ENCODE measurements at regions of chr13 and their contacts with region 1.

Region 1: DNA sequence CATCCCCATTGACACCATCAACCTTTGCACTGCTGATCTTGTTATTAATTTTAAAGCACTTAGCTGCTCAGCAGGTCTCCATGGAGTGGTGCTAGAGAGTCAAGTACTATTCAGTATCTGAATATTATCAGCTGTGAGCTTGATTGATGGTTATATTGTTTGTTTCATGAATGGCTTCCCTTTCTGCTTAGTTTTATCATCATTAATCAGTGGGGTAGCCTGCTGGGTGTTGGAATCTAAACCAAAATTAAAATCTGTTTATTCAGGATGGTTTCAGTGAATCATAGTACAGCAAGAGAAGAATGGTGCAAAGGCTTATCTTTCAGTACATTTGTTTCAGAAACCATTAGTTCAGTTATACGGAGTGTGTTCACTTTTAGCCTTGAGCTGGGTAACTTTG is 42.5 kb upstream of the SCEL start:
- DNase-seq: peak in 2 of 4 donors; percentile 16 to 26
- ATAC-seq: peak; percentile 50
- H3K4me3 ChIP-seq: no peak overlapping the region
- H3K27ac ChIP-seq: no peak overlapping the region
- H3K4me1 ChIP-seq: no peaks in the 10 kb centered on the region
- H3K27me3 ChIP-seq: no peaks in the 10 kb centered on the region
- CTCF ChIP-seq: peak in 6 of 7 experiments; percentile 31 to 59 (median 54)
- POLR2A ChIP-seq: no peak

Region 2: GRCh38 chr13:77565635-77566034 is 72.7 kb after region 1 on chr13:
- intact Hi-C with region 1: loop called (anchors 10 kb)
- DNase-seq: no peak
- ATAC-seq: no peak
- H3K4me3 ChIP-seq: no peak overlapping the region
- H3K27ac ChIP-seq: no peak overlapping the region
- H3K4me1 ChIP-seq: no peaks in the 10 kb centered on the region
- H3K27me3 ChIP-seq: no peaks in the 10 kb centered on the region
- CTCF ChIP-seq: peak in 5 of 7 experiments; percentile 19 to 43 (median 37)
- POLR2A ChIP-seq: no peak

Measured in body of pancreas (tissue), 4 donors.